Activated T-helper 2 cell treated with anti-CD3 and anti-CD28 coated beads, Interferon-gamma antibody, Interleukin-2, Interleukin-4, amounts not matched to agents 10 μg/mL and 5 μg/mL and 100 μg/mL, durations not matched to agents 14 hours and 24 hours and 36 hours (primary cell): ENCODE measurements at regions of chr2 and their contacts with region 1.

Region 1: GRCh38 chr2:205700331-205701132 is 18.2 kb downstream of the NRP2 start:
- DNase-seq: no peak
- H3K4me3 Mint-ChIP-seq: peak overlapping the region; percentile 51
- H3K27ac Mint-ChIP-seq: peak overlapping the region; percentile 84
- H3K4me1 Mint-ChIP-seq: peaks cover 58% of the 10 kb centered on the region
- H3K27me3 Mint-ChIP-seq: no peaks in the 10 kb centered on the region

Region 2: DNA sequence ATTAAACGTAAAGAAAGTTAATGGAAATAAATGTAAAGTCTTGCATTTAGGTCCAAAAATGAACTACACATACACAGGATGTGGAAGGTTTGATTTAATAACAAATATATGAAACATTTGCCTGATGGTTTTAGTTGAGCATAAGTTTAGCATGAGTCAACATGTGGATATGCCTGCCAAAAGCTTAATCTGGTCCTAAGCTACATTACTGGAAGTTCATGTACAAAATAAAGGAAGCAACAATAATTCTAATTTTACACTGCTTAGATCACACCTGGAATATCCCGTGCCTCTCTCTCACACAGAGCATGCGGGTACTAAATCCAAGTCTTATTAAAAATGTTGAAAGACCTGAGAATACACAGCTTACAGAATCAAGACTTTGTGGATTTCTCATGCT is 294.8 kb before region 1 on chr2:
- intact Hi-C with region 1: no loop called
- DNase-seq: no peak
- H3K4me3 Mint-ChIP-seq: no peak overlapping the region
- H3K27ac Mint-ChIP-seq: no peak overlapping the region
- H3K4me1 Mint-ChIP-seq: peaks cover 5% of the 10 kb centered on the region
- H3K27me3 Mint-ChIP-seq: peaks cover 22% of the 10 kb centered on the region

Region 3: GRCh38 chr2:205539601-205540000 is 160.9 kb before region 1 on chr2:
- intact Hi-C with region 1: no loop called
- DNase-seq: no peak
- H3K4me3 Mint-ChIP-seq: no peak overlapping the region
- H3K27ac Mint-ChIP-seq: no peak overlapping the region
- H3K4me1 Mint-ChIP-seq: peaks cover 28% of the 10 kb centered on the region
- H3K27me3 Mint-ChIP-seq: peaks cover 9% of the 10 kb centered on the region

Region 4: DNA sequence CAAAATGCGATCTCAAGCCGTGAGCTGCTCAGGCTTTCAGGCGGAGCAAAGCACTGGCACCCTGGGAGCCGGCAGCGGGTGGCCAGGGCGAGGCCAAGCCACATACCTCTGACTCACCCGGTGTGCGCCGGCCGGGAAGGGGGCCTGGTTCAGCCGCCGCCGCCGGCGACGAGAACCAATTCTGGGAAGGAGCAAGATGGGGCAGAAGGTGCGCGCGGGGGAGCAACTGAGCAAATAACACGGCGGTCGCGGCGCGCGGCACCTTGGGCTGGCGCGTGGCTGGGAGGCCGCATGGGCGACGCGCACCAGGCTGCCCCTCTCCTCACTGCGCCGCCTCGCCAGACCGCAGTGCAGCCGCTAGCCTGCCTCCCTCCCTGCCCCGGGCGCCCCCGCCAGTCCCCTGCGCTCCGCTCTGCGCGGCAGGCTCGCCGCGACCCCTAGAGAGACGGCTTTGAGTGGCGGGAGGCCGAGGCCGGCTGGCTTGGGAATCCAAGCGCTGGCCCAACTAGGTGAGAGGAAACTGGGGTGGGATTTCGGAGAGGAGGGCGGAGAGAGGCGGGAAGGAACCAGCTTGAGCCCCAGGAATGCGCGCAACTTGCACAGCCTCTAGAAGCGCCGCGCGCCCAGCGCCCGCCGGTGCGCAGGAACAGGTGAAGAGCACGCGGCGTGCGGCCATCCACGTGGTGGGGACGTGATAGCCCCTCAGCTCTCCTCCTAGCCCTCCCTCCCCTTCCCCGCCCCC is 15.0 kb before region 1 on chr2:
- intact Hi-C with region 1: loop called (anchors 2 kb)
- DNase-seq: no peak
- H3K4me3 Mint-ChIP-seq: peak overlapping the region; percentile 87
- H3K27ac Mint-ChIP-seq: peak overlapping the region; percentile 85
- H3K4me1 Mint-ChIP-seq: peaks cover 27% of the 10 kb centered on the region
- H3K27me3 Mint-ChIP-seq: peaks cover 42% of the 10 kb centered on the region

Region 5: GRCh38 chr2:205714058-205714776 is 13.7 kb after region 1 on chr2:
- intact Hi-C with region 1: loop called (anchors 1 kb)
- DNase-seq: no peak
- H3K4me3 Mint-ChIP-seq: no peak overlapping the region
- H3K27ac Mint-ChIP-seq: peak overlapping the region; percentile 77
- H3K4me1 Mint-ChIP-seq: peaks cover 84% of the 10 kb centered on the region
- H3K27me3 Mint-ChIP-seq: no peaks in the 10 kb centered on the region